Sciatic nerve (tissue), 2 donors: ENCODE measurements at regions of chr19 and their contacts with region 1.

Region 1: DNA sequence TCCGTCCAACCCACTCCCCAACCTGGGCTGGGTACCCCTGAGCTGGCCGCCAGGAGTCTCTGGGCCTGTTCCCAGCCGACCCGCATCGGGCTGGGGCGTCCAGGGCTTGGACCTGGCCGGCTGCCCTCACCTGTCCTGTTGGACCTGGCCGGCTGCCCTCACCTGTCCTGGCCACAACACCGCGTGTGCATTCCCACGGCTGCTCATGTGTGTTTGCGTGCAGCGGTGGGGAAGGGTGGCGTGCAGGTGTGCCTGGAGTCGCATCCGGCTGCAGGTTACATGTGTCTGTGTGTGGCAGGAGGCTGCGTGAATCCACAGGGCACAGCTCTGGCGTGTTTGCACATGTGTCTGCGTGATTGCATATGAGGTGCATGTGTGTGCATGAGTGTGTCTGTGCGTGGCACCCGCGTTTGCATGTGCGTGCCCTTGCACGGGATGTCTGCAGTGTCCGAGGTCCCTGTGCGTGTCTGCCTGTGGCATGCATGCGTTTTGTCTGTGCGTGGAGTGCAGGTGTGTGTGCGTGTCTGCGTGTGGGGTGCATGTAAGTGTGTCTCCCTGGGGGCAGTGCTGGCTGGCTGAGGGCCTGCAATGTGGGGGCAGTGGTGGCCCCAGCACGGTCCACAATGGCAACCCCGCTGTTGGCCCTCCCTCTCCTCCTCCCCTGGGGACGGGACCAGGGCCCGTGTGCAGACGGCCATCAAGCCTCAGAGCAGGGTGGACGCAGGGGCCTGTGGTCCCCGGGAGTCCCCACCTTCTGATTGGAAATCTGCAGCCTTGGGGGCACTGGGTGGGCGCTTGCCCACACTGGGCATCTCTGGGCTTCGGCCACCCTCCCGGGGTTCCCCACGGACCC is 3.4 kb downstream of the EFNA2 start:
- DNase-seq: no peak
- ATAC-seq: no peak

Region 2: GRCh38 chr19:1223018-1223855 is 65.8 kb before region 1 on chr19:
- intact Hi-C with region 1: no loop called
- DNase-seq: no peak
- ATAC-seq: no peak

Region 3: GRCh38 chr19:1304197-1304924 is 15.3 kb after region 1 on chr19:
- intact Hi-C with region 1: no loop called
- DNase-seq: no peak
- ATAC-seq: no peak

Region 4: DNA sequence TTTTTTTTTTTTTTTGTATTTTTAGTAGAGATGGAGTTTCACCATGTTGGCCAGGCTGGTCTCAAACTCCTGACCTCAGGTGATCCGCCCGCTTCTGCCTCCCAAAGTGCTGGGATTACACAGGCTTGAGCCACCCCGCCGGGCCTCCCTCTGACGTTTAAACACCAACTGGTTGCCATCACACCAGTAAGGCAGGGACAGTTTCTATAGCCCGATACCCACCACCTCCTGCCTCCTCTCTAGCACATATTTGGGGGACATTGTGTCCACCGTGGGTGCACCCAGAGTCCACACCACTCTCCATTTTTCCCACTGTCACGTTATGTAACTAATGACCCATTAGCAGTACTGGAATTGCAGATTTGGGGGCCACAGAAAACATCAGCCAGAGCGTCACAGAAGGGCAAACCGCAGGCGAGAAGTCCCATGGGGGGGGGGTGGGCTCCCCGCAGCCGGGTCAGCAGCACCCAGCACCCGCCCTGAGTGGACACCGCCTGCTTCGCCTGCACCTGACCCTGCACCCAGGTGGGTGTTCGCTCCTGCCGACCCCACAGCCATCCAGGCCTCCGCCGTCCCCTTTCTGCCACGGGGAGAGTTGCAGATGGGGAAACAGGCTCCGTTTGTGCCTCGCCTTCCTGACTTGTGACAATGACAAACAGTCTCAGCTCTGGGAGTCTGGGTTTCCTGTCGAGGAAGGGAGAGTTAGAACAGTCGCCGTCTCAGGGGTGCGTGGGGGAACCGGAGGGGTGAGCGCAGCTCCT is 467.8 kb after region 1 on chr19:
- intact Hi-C with region 1: loop called (anchors 1 kb)
- DNase-seq: no peak
- ATAC-seq: no peak